ENCODE measurements at regions of chr1 and their contacts with region 1.

Region 1: DNA sequence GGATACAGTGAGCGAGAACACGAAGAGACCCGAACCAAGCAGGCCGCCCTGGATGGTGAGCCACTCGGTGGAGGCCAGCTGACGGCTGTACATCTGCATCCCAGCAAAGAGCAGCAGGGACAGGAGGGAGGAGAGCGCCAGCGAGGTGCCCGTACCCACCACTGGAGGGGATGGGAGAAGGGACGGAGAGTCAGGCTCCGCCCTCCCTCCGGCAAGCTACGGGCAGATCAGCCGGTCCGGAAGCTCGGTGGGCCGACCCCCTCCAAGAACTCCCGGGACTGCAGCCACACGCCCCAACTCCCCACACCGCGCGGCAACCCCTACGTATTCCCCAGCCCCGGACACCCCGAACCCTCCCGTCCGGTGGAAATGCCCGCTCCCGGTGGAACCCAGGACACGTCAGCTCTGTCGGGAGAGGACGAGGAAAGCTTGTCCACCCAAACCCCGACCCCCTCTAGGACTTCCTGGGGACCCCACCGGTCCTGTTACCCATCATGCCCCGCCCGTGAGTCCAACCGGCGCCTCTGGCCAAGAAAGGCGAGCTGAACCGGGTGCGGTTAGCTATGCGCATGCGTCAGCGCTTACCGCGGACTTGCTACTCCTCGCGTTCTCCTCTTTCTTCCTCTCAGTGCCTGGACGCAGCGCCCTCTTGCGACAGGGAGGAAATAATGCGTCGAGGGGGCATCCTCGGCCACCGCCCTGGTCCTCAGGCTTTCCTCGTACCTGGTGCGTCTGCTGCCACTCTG is at the start of gene KRTCAP2:
- DNase-seq: peak; percentile 98
- H3K4me3 Mint-ChIP-seq: peak within 1 kb of the TSS; percentile 87
- H3K27ac Mint-ChIP-seq: peak within 1 kb of the TSS; percentile 95
- H3K4me1 Mint-ChIP-seq: peaks cover 46% of the 10 kb centered on the region
- H3K27me3 Mint-ChIP-seq: no peaks in the 10 kb centered on the region
- CTCF ChIP-seq: peak; percentile 97
- total RNA-seq, gene KRTCAP2: 313 and 383 TPM in 2 replicates

Region 2: GRCh38 chr1:153967082-153968000 is 1205.6 kb before region 1 on chr1 and contains the start of gene CREB3L4:
- CTCF ChIA-PET with region 1: no interaction called
- POLR2A ChIA-PET with region 1: no interaction called
- intact Hi-C with region 1: no loop called
- DNase-seq: peak; percentile 100
- H3K4me3 Mint-ChIP-seq: peak within 1 kb of the TSS; percentile 95
- H3K27ac Mint-ChIP-seq: peak within 1 kb of the TSS; percentile 94
- H3K4me1 Mint-ChIP-seq: peaks cover 40% of the 10 kb centered on the region
- H3K27me3 Mint-ChIP-seq: no peaks in the 10 kb centered on the region
- CTCF ChIP-seq: peak; percentile 32
- total RNA-seq, gene CREB3L4: 14.7 and 17.6 TPM in 2 replicates

Region 3: GRCh38 chr1:154974063-154974807 is 198.7 kb before region 1 on chr1 and contains the start of gene CKS1B:
- CTCF ChIA-PET with region 1: interaction called, 3 read pairs
- POLR2A ChIA-PET with region 1: interaction called, 7 read pairs
- intact Hi-C with region 1: loop called (anchors 5 kb)
- DNase-seq: peak; percentile 100
- H3K4me3 Mint-ChIP-seq: no peak within 1 kb of the TSS
- H3K27ac Mint-ChIP-seq: no peak within 1 kb of the TSS
- H3K4me1 Mint-ChIP-seq: peaks cover 32% of the 10 kb centered on the region
- H3K27me3 Mint-ChIP-seq: no peaks in the 10 kb centered on the region
- CTCF ChIP-seq: no peak
- total RNA-seq, gene CKS1B: 285 and 289 TPM in 2 replicates

Region 4: DNA sequence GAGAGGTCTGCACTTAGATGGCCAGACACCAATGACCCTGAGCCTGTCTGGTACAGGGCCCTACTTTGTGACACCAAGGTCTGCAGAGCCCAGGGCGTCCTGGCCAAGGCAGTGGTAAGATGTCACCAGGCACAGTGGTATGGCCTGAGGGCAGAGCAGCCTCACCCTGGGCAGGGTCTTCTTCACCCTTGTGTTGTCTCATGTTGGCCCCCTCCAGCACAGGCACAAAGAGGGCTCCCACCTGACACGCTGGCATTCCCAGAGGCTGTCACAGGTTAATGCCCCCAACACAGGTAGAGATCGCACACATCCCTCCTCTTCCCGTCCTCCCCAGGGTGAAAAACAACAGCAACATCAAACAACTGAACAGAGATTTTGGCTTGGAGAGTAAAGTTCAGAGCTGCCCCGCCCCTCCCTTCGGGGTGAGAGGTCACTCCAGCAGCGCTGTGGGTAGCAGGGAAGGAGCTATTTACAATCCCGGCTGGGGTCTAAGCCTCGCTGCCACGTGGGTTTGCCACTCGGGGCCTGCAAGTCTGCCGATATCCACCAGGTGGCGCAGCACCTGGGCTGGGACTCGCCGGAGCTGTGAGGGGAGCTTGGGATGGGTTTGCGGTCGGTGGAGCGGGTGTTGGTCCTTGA is 81.7 kb before region 1 on chr1:
- CTCF ChIA-PET with region 1: interaction called, 380 read pairs
- POLR2A ChIA-PET with region 1: interaction called, 12 read pairs
- intact Hi-C with region 1: no loop called
- DNase-seq: peak; percentile 83
- H3K4me3 Mint-ChIP-seq: no peak overlapping the region
- H3K27ac Mint-ChIP-seq: no peak overlapping the region
- H3K4me1 Mint-ChIP-seq: peaks cover 26% of the 10 kb centered on the region
- H3K27me3 Mint-ChIP-seq: peaks cover 16% of the 10 kb centered on the region
- CTCF ChIP-seq: peak; percentile 100

Region 5: GRCh38 chr1:155145491-155145890 is 27.4 kb before region 1 on chr1:
- CTCF ChIA-PET with region 1: interaction called, 18 read pairs
- POLR2A ChIA-PET with region 1: interaction called, 16 read pairs
- intact Hi-C with region 1: no loop called
- DNase-seq: no peak
- H3K4me3 Mint-ChIP-seq: no peak overlapping the region
- H3K27ac Mint-ChIP-seq: no peak overlapping the region
- H3K4me1 Mint-ChIP-seq: no peaks in the 10 kb centered on the region
- H3K27me3 Mint-ChIP-seq: peaks cover 8% of the 10 kb centered on the region
- CTCF ChIP-seq: peak; percentile 12

Region 6: GRCh38 chr1:155193275-155193990 is 20.5 kb after region 1 on chr1:
- CTCF ChIA-PET with region 1: interaction called, 95 read pairs
- POLR2A ChIA-PET with region 1: interaction called, 215 read pairs
- intact Hi-C with region 1: loop called (anchors 2 kb)
- DNase-seq: peak; percentile 100
- H3K4me3 Mint-ChIP-seq: peak overlapping the region; percentile 94
- H3K27ac Mint-ChIP-seq: peak overlapping the region; percentile 100
- H3K4me1 Mint-ChIP-seq: peaks cover 32% of the 10 kb centered on the region
- H3K27me3 Mint-ChIP-seq: no peaks in the 10 kb centered on the region
- CTCF ChIP-seq: peak; percentile 99

Region 7: DNA sequence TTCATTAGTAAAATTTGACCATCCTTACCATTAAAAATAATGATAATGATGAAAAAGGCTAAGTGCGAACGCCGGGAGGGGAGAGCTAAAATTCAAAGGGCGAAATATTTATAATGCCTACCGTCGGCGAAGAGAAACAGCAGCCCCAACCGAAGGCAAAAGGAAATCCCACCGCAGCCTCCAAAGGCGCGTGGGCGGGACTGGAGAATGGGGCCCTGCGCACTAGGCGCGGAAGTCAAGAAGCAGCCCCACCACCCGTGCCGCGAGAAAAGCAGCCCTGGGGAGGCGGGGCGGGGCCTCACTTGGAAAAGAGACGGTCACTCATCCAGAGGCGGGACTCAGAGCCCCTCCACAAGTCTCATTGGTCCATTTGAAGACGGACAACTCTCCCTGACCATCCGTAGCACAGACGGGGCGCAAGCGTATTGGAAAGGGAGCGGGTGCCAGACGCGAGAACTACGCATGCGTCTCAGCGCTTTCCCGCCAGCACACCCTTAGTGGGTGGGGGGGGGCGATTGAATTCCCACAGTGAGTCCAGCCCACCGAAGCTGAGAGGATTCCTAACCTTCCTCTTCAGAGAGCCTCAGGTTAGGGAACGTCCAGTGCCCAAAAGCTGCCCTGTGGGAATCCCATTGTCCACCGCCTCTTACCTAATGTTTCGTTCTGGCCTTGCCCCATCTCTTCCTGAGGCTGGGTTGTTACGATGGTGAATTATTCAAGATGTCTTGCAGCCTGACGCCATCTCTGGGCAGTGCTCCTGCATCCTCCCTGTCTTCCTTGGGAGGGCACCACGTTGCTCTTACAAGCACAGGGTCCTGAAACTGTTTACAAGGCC is 54.6 kb after region 1 on chr1:
- CTCF ChIA-PET with region 1: interaction called, 40 read pairs
- POLR2A ChIA-PET with region 1: interaction called, 11 read pairs
- intact Hi-C with region 1: loop called (anchors 1 kb)
- DNase-seq: peak; percentile 100
- H3K4me3 Mint-ChIP-seq: peak overlapping the region; percentile 85
- H3K27ac Mint-ChIP-seq: peak overlapping the region; percentile 89
- H3K4me1 Mint-ChIP-seq: peaks cover 34% of the 10 kb centered on the region
- H3K27me3 Mint-ChIP-seq: no peaks in the 10 kb centered on the region
- CTCF ChIP-seq: no peak

Region 8: DNA sequence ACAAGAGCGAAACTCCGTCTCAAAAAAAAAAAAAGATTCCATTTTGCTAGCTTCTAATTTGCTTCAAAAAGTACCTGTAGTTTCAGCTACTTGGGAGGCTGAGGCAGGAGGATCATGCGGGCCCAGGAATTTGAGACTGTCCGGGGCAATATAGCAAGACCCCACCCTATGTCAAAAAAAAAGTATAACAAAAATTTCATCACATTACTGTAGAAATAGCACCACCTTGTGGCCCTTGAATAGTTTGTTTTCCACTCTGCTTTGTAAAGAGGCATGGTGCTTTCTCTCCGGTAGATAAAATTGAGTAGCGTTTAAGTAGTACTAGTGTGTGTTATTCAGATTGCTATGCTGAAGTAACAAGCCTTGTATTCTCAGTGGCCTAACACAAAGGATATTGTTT is 418.9 kb after region 1 on chr1:
- CTCF ChIA-PET with region 1: interaction called, 6 read pairs
- POLR2A ChIA-PET with region 1: no interaction called
- intact Hi-C with region 1: loop called (anchors 5 kb)
- DNase-seq: peak; percentile 78
- H3K4me3 Mint-ChIP-seq: no peak overlapping the region
- H3K27ac Mint-ChIP-seq: no peak overlapping the region
- H3K4me1 Mint-ChIP-seq: no peaks in the 10 kb centered on the region
- H3K27me3 Mint-ChIP-seq: no peaks in the 10 kb centered on the region
- CTCF ChIP-seq: peak; percentile 80